ENCODE measurements at regions of chr1 and their contacts with region 1.

Region 1: DNA sequence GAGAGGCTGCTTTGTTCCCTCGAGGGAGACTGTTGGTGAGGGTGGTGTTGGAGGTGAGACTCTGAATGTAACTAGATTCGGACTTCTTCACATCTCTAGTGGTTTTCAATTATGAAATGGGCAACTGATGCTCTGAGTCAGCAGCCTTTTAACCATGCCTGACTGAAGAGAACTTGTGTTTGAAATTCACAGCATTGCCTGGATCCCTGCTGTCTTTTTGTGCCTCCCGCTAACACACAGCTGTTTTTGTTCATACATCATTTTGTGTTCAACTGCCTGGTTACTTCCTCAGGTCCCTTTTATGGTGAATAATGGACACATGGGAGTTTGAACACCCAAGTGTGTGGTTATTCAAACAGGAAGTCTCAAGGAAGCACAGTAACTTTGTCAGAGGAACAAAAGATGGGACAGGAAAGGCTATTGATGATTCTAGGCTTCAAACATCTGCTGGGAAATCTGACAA is 16.8 kb downstream of the LAMC1 start:
- DNase-seq: no peak
- ATAC-seq: peak in 1 of 2 donors; percentile 21
- H3K4me3 ChIP-seq: no peak overlapping the region
- H3K27ac ChIP-seq: peak overlapping the region; percentile 8
- H3K4me1 ChIP-seq: peaks cover 10% of the 10 kb centered on the region
- H3K27me3 ChIP-seq: no peaks in the 10 kb centered on the region

Region 2: DNA sequence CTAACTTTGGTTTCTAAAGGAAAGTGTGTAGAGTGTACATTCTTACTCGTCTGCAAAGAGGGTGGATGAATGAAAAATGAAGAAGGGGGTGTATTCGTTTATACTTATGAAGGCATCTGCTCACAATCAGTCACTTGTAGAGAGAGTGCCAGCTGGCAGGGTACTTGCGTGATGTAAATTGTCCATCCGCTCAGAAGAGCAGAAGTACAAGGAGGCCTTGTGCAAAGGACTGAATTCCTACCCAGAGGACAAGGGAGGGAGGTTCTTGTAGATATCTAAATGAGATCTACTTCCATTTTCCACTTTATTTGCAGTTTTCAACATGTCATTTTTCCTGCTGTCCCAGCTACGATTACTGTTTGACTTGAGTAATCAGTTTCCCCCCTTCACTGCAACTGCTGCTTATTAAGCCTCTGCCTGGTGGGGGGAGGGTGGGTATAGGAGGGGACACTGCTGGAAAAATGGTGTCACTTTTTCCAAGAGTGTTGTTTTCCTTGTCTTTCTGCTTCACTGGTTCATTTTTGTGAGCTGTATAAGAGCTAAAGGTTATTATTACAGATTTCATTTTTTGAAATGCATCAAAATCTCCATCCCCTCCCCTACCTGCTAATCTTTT is 50.5 kb after region 1 on chr1:
- intact Hi-C with region 1: loop called in 1 of 4 experiments (anchors 10 kb)
- DNase-seq: peak; percentile 72 to 82 (median 73)
- ATAC-seq: peak; percentile 88 to 90
- H3K4me3 ChIP-seq: no peak overlapping the region
- H3K27ac ChIP-seq: no peak overlapping the region
- H3K4me1 ChIP-seq: peaks cover 6% of the 10 kb centered on the region
- H3K27me3 ChIP-seq: no peaks in the 10 kb centered on the region

Measured in right cardiac atrium (tissue), 5 donors.